ENCODE measurements at regions of chr9 and their contacts with region 1.

Region 1: GRCh38 chr9:135478858-135479468 is 619 bp upstream of the PPP1R26 start:
- DNase-seq: peak; percentile 38 to 62 (median 47)
- ATAC-seq: peak; percentile 37
- H3K4me3 ChIP-seq: peak overlapping the region; percentile 44
- H3K27ac ChIP-seq: peak overlapping the region; percentile 59; the same call in 1 of the 3 replicates
- H3K4me1 ChIP-seq: peaks cover 13 to 48% of the 10 kb centered on the region in 2 experiments
- H3K27me3 ChIP-seq: no peaks in the 10 kb centered on the region
- CTCF ChIP-seq: peak; percentile 25 to 44 (median 37); a peak in 5 of 6 replicates
- EP300 ChIP-seq: no peak
- POLR2A ChIP-seq: no peak
- RAD21 ChIP-seq: no peak; a peak in 1 of 4 replicates

Region 2: DNA sequence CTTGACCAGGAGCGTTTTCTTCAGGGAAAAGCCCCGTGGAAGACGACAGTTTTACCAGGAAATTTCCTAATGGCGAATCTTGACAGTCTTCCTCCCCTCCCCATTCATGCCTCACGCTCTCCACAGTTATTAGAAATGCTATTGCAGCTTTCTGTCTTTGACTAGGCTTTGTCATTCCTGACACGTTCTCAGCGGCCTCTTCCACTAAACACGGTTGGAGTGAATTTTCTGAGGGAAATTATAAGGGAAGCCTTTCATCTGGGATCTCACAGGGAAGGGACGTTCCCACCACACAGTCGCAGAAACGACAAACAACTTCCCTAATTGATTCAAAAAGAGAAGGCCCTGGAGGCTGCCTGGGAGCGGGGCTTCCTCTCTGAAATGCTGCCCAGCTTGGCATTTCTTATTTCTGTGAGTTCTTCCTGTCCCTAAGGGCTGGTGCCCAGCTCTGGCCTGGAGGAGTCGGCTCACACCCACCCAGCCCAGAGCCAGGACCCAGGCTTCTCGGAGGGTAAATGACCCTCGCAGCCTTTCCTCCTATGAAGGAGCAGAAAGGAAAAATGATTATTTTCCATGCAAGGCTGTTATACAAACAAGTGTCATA is 56.5 kb before region 1 on chr9:
- CTCF ChIA-PET with region 1: no interaction called
- POLR2A ChIA-PET with region 1: no interaction called
- in situ Hi-C with region 1: no loop called
- intact Hi-C with region 1: loop called (anchors 5 kb)
- DNase-seq: peak in 1 of 4 experiments; percentile 3
- ATAC-seq: no peak
- H3K4me3 ChIP-seq: no peak overlapping the region
- H3K27ac ChIP-seq: 0 out of 3 replicates have a peak overlapping the region, but pooled peaks have one; percentile 30
- H3K4me1 ChIP-seq: peaks cover 9 to 19% of the 10 kb centered on the region in 2 experiments
- H3K27me3 ChIP-seq: no peaks in the 10 kb centered on the region
- CTCF ChIP-seq: no peak
- EP300 ChIP-seq: no peak
- POLR2A ChIP-seq: no peak
- RAD21 ChIP-seq: no peak

Region 3: DNA sequence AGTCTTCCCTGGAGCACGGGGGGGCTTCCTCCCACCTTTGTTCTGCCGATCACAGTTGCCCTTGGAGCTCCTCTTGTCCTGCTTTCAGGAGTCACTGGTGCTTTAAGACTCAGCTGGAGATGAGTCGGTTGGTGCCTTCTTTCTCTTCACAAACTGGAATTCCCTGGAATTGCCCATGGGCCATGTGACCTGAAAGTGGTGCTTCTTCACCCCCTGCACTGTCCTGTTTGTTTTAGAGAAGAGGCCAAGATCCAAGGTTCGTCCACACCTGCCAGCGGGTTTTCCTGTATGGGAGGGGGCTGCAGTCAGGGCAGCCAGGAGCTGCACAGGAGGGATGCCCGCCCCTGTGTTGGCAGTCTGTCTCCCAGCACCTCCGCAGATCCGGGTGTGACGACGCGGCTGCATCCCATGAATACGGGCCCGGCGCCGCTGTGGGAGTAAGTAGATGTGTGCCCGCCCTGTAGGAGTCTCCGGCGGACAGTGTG is 12.1 kb after region 1 on chr9:
- CTCF ChIA-PET with region 1: no interaction called
- POLR2A ChIA-PET with region 1: interaction called, 13 read pairs
- in situ Hi-C with region 1: no loop called
- intact Hi-C with region 1: no loop called
- DNase-seq: no peak
- ATAC-seq: no peak
- H3K4me3 ChIP-seq: no peak overlapping the region
- H3K27ac ChIP-seq: no peak overlapping the region
- H3K4me1 ChIP-seq: peaks cover 2 to 15% of the 10 kb centered on the region in 2 experiments; a peak in 2 of 5 replicates
- H3K27me3 ChIP-seq: no peaks in the 10 kb centered on the region
- CTCF ChIP-seq: no peak
- EP300 ChIP-seq: no peak
- POLR2A ChIP-seq: no peak
- RAD21 ChIP-seq: no peak